Activated CD4-positive, alpha-beta T cell treated with anti-CD3 and anti-CD28 coated beads for 36 hours (primary cell): ENCODE measurements at regions of chr11 and their contacts with region 1.

Region 1: GRCh38 chr11:129163714-129164164 is 28.4 kb downstream of the ARHGAP32 start:
- DNase-seq: peak; percentile 24
- ATAC-seq: peak; percentile 84
- H3K4me3 Mint-ChIP-seq: no peak overlapping the region
- H3K27ac Mint-ChIP-seq: no peak overlapping the region
- H3K4me1 Mint-ChIP-seq: peaks cover 8% of the 10 kb centered on the region
- H3K27me3 Mint-ChIP-seq: no peaks in the 10 kb centered on the region

Region 2: DNA sequence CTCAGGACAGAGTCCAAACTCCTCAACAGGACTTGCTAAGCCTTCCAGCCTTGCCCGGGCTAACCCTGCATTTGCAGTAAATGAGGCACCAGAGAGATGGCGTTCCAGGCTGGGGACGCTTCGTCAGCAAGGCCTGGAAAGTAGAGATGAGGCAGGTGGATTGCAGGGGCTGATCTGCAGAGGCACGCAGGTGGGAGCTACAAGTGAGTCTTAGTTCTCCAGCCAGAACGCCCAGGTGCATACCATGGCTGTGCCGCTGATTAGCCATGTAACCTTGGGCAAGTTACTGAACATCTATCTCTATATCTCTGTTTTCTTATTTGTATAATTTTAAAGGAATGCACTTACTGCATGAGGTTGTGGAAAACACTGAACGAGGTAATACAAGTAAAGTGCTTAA is 159.2 kb after region 1 on chr11:
- CTCF ChIA-PET with region 1: no interaction called
- POLR2A ChIA-PET with region 1: no interaction called
- intact Hi-C with region 1: loop called in 1 of 2 experiments (anchors 1 kb)
- DNase-seq: no peak
- ATAC-seq: no peak
- H3K4me3 Mint-ChIP-seq: no peak overlapping the region
- H3K27ac Mint-ChIP-seq: no peak overlapping the region
- H3K4me1 Mint-ChIP-seq: peaks cover under 1% of the 10 kb centered on the region
- H3K27me3 Mint-ChIP-seq: no peaks in the 10 kb centered on the region